HEK293 (cell line): ENCODE measurements at regions of chr2 and their contacts with region 1.

Region 1: GRCh38 chr2:172102391-172103278 is at the start of gene DLX2:
- H3K4me3 ChIP-seq: peak within 1 kb of the TSS; percentile 67
- H3K27ac ChIP-seq: peak within 1 kb of the TSS; percentile 99
- H3K4me1 ChIP-seq: peaks cover 14% of the 10 kb centered on the region
- CTCF ChIP-seq: peak; percentile 57; the same call in 1 of the 2 replicates

Region 2: GRCh38 chr2:171811245-171811628 is 291.4 kb before region 1 on chr2:
- CTCF ChIA-PET with region 1: interaction called, 31 read pairs
- POLR2A ChIA-PET with region 1: interaction called, 4 read pairs
- H3K4me3 ChIP-seq: no peak overlapping the region
- H3K27ac ChIP-seq: no peak overlapping the region
- H3K4me1 ChIP-seq: peaks cover 33% of the 10 kb centered on the region
- CTCF ChIP-seq: peak; percentile 65

Region 3: GRCh38 chr2:172021955-172022354 is 80.7 kb before region 1 on chr2:
- CTCF ChIA-PET with region 1: interaction called, 3 read pairs
- POLR2A ChIA-PET with region 1: interaction called, 21 read pairs
- H3K4me3 ChIP-seq: peak overlapping the region; percentile 11
- H3K27ac ChIP-seq: peak overlapping the region; percentile 81
- H3K4me1 ChIP-seq: peaks cover 14% of the 10 kb centered on the region
- CTCF ChIP-seq: no peak

Region 4: GRCh38 chr2:172084734-172085459 is 17.7 kb before region 1 on chr2:
- CTCF ChIA-PET with region 1: interaction called, 4 read pairs
- POLR2A ChIA-PET with region 1: interaction called, 147 read pairs
- H3K4me3 ChIP-seq: peak overlapping the region; percentile 58
- H3K27ac ChIP-seq: peak overlapping the region; percentile 95
- H3K4me1 ChIP-seq: no peaks in the 10 kb centered on the region; the same call in 1 of the 2 replicates
- CTCF ChIP-seq: peak; percentile 81

Region 5: DNA sequence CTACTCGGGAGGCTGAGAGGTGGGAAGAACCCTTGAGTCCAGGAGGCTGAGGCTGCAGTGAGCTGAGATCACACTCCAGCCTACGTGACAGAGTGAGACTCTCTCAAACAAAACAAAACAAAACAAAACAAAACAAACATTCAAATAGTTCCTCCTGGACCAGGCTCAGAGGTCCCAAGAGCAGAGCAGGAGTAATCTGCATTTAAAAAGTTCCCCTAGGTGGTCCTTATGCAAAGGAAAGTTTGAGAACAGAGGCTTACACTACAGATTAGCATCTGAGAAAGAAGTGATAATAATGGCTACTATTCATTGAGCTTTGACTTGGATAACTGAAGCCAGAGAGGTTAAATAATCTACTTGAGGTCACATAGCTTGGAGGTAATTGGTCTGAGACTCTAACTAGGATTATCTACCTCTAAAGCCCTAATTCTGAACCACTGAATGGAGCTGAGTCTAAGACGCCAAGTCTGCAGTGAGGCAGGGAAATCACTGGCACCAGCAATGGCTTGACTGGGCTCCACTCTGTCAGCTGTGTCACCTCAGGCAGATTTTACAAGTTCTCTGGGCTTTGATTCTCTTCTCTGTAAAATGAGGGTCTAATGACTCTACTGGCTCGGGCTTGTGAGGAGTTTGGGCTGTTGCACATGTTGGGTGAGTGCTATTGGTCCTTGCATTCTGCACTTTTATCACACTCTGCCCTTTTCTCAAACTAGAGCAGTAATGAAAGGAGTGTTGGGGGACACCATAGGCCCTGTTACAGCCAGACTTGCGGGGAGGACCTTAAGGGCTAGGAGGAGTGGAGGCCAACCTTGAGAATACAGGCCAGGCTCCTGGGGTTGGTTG is 29.3 kb after region 1 on chr2:
- CTCF ChIA-PET with region 1: interaction called, 15 read pairs
- POLR2A ChIA-PET with region 1: interaction called, 5 read pairs
- H3K4me3 ChIP-seq: no peak overlapping the region
- H3K27ac ChIP-seq: no peak overlapping the region
- H3K4me1 ChIP-seq: no peaks in the 10 kb centered on the region
- CTCF ChIP-seq: no peak

Region 6: DNA sequence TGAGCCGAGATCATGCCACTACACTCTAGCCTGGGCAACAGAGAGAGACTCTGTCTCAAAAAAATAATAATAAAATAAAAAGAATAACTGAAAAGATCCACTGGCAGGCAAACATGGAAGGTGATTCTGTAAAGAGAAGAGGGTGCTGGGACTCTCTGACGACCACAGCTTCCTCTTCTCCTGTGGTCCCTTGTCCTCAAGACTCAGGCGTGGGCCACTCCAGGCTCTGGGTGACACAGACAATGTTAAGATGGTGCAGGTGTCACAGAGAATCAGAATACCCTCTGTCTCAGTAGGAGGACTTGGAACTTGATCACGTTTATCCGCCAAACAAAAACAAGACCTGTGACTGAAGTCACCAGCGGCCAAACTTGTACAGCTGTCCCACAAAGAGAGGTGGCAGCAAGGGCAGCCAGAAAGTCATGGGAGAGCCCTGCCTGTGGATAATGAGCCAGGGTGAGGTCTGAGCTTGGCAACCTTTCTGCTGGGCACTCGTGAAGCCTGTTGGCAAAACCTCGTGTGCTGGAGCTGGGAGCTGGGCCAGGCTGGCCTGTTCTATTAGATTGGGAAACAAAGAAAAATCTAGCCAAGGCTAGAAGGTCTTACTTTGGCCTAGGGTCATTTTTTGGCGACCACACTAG is 248.3 kb after region 1 on chr2:
- CTCF ChIA-PET with region 1: no interaction called
- POLR2A ChIA-PET with region 1: no interaction called
- H3K4me3 ChIP-seq: no peak overlapping the region
- H3K27ac ChIP-seq: no peak overlapping the region
- H3K4me1 ChIP-seq: no peaks in the 10 kb centered on the region
- CTCF ChIP-seq: no peak